PC-9 (cell line): ENCODE measurements at regions of chr12 and their contacts with region 1.

Region 1: GRCh38 chr12:52243856-52244614 is 11.0 kb downstream of the KRT7 start:
- DNase-seq: peak; percentile 89 to 95
- H3K4me3 ChIP-seq: 0 out of 2 replicates have a peak overlapping the region, but pooled peaks have one; percentile 7
- H3K27ac ChIP-seq: peak overlapping the region; percentile 90
- H3K4me1 ChIP-seq: peaks cover 99% of the 10 kb centered on the region
- H3K27me3 ChIP-seq: no peaks in the 10 kb centered on the region
- CTCF ChIP-seq: no peak; the same call in 1 of the 2 replicates

Region 2: DNA sequence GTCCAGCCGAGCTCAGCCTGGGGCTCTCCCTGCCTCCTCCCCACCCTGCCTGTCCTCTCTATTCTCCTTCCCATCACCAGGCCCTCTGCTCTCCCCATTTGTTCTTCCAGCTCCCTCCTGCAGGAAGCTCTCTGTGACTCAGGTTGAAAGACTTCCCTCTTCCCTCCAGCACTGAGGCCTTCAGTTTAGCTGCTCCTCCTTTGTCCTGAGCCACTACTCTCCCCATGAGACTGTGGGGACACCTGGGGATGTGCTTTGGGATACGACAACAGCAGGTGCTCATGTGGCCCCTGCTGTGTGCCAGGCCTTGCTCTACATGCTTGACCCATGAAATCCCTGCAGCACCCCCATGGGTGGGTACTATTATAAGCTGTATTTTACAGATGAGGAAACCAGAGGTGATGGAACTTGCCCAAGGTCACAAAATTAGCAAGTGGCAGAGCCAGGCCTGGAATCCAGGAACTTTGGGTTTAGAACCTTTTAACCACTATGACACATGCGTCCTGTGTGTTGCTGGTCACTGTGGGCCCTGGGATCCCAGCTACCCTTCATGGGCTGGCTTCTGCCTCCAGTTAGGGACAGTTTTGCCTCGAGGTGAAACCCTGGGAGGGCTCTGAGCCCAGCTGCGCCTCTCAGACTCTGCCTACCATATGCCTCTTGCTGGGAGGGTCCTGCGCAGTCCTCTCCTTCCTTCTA is 57.7 kb before region 1 on chr12:
- CTCF ChIA-PET with region 1: no interaction called
- POLR2A ChIA-PET with region 1: interaction called, 26 read pairs
- intact Hi-C with region 1: loop called (anchors 2 kb)
- DNase-seq: peak; percentile 79 to 94
- H3K4me3 ChIP-seq: no peak overlapping the region; the same call in 1 of the 2 replicates
- H3K27ac ChIP-seq: peak overlapping the region; percentile 75
- H3K4me1 ChIP-seq: peaks cover 59% of the 10 kb centered on the region
- H3K27me3 ChIP-seq: no peaks in the 10 kb centered on the region
- CTCF ChIP-seq: no peak

Region 3: DNA sequence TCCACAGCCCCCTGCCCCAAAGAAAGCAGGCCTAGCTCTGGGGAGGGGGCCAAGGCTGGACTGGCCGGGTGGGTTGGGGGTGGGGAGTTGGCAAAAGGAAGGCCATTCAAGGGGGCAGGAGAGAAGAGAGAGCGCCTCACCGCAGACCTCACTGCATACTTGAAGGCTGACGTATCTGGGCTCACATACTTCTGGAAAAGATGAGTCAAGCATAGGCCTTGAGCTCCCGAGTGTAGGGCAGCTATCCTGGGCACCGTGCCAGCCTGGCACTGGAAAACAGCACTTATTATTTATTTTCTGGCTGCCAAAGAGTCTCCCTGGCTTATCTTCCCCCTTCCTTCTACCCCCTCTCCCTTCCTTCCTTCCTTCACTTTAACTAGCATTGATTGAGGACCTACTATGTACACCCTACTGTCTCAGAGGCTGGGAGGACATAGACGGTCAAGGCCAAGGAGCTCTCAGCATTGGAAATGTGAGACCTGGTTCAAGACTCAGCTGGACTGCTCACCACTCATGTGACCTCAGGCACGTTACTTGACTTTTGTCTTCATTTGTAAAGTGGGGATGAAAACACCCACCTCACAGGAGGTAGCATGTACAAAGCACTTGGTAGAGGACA is 51.8 kb before region 1 on chr12:
- CTCF ChIA-PET with region 1: no interaction called
- POLR2A ChIA-PET with region 1: interaction called, 26 read pairs
- intact Hi-C with region 1: loop called (anchors 2 kb)
- DNase-seq: peak; percentile 90 to 98
- H3K4me3 ChIP-seq: peak overlapping the region; percentile 92
- H3K27ac ChIP-seq: peak overlapping the region; percentile 77
- H3K4me1 ChIP-seq: peaks cover 75% of the 10 kb centered on the region
- H3K27me3 ChIP-seq: no peaks in the 10 kb centered on the region
- CTCF ChIP-seq: no peak